K562 (cell line): ENCODE measurements at regions of chr19 and their contacts with region 1.

Region 1: DNA sequence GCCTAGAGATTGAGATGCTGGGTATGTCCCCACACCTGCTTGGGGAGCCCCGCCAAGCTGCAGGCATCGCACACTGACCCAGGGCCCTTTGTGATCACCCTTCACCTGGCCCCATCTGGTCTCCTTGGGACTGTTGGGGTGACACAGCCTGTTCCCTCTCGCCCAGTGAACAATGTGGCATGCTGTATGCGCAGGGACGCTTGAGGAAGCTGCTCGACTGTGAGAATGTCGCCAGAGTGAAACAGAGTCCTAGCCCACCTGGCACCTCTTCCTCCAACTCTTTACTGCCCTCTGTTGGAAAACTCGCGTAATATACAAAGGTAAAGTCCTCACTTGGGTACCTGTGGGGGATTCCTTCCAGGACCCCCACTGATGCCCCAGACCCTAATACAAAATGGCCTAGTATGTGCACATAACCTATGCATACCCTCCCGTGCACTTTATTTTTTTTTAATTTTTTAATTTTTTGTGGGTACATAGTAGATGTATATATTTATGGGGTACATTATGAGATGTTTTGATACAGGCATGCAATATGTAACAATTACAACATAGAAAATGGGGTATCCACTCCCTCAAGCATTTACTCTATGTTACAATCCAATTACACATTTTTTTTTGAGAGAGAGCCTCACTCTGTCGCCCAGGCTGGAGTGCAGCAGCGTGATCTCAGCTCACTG is 9.0 kb downstream of the BLOC1S3 start:
- DNase-seq: peak; percentile 59 to 66 (median 64)
- ATAC-seq: peak; percentile 75
- H3K4me3 ChIP-seq: no peak overlapping the region
- H3K27ac ChIP-seq: no peak overlapping the region
- H3K4me1 ChIP-seq: peaks cover 2 to 9% of the 10 kb centered on the region in 2 experiments; a peak in 4 of 5 replicates
- H3K27me3 ChIP-seq: no peaks in the 10 kb centered on the region
- CTCF ChIP-seq: peak; percentile 68 to 74 (median 70)
- EP300 ChIP-seq: no peak
- POLR2A ChIP-seq: no peak
- RAD21 ChIP-seq: peak in 1 of 2 experiments; percentile 72; a peak in 3 of 4 replicates

Region 2: GRCh38 chr19:45161738-45162607 is 25.6 kb before region 1 on chr19:
- CTCF ChIA-PET with region 1: no interaction called
- POLR2A ChIA-PET with region 1: no interaction called
- in situ Hi-C with region 1: no loop called
- intact Hi-C with region 1: loop called (anchors 1 kb)
- DNase-seq: peak; percentile 49 to 66 (median 60)
- ATAC-seq: peak; percentile 87
- H3K4me3 ChIP-seq: no peak overlapping the region
- H3K27ac ChIP-seq: no peak overlapping the region
- H3K4me1 ChIP-seq: peaks cover 3 to 70% of the 10 kb centered on the region in 2 experiments; a peak in 3 of 5 replicates
- H3K27me3 ChIP-seq: peaks cover 6 to 26% of the 10 kb centered on the region in 2 experiments; a peak in 4 of 5 replicates
- CTCF ChIP-seq: peak; percentile 76 to 82 (median 81)
- EP300 ChIP-seq: no peak
- POLR2A ChIP-seq: no peak
- RAD21 ChIP-seq: peak; percentile 41 to 80